CD8-positive, alpha-beta T cell (primary cell): ENCODE measurements at regions of chr16 and their contacts with region 1.

Region 1: GRCh38 chr16:56370185-56370876 is 55.0 kb downstream of the AMFR start:
- DNase-seq: no peak
- ATAC-seq: no peak
- H3K4me3 ChIP-seq: no peak overlapping the region
- H3K4me3 Mint-ChIP-seq: no peak overlapping the region
- H3K27ac ChIP-seq: no peak overlapping the region
- H3K27ac Mint-ChIP-seq: no peak overlapping the region
- H3K4me1 ChIP-seq: peaks cover 12% of the 10 kb centered on the region
- H3K4me1 Mint-ChIP-seq: peaks cover 25% of the 10 kb centered on the region
- H3K27me3 ChIP-seq: no peaks in the 10 kb centered on the region
- H3K27me3 Mint-ChIP-seq: no peaks in the 10 kb centered on the region
- CTCF ChIP-seq: no peak

Region 2: GRCh38 chr16:56262148-56262547 is 108.2 kb before region 1 on chr16:
- CTCF ChIA-PET with region 1: no interaction called
- POLR2A ChIA-PET with region 1: no interaction called
- intact Hi-C with region 1: no loop called
- DNase-seq: peak; percentile 17 to 87 (median 58)
- ATAC-seq: peak; percentile 93
- H3K4me3 ChIP-seq: peak overlapping the region in 1 of 2 experiments; percentile 21
- H3K4me3 Mint-ChIP-seq: peak overlapping the region; percentile 13
- H3K27ac ChIP-seq: peak overlapping the region in 1 of 2 experiments; percentile 69
- H3K27ac Mint-ChIP-seq: peak overlapping the region; percentile 65
- H3K4me1 ChIP-seq: peaks cover 28% of the 10 kb centered on the region
- H3K4me1 Mint-ChIP-seq: peaks cover 29% of the 10 kb centered on the region
- H3K27me3 ChIP-seq: no peaks in the 10 kb centered on the region
- H3K27me3 Mint-ChIP-seq: no peaks in the 10 kb centered on the region
- CTCF ChIP-seq: no peak

Region 3: DNA sequence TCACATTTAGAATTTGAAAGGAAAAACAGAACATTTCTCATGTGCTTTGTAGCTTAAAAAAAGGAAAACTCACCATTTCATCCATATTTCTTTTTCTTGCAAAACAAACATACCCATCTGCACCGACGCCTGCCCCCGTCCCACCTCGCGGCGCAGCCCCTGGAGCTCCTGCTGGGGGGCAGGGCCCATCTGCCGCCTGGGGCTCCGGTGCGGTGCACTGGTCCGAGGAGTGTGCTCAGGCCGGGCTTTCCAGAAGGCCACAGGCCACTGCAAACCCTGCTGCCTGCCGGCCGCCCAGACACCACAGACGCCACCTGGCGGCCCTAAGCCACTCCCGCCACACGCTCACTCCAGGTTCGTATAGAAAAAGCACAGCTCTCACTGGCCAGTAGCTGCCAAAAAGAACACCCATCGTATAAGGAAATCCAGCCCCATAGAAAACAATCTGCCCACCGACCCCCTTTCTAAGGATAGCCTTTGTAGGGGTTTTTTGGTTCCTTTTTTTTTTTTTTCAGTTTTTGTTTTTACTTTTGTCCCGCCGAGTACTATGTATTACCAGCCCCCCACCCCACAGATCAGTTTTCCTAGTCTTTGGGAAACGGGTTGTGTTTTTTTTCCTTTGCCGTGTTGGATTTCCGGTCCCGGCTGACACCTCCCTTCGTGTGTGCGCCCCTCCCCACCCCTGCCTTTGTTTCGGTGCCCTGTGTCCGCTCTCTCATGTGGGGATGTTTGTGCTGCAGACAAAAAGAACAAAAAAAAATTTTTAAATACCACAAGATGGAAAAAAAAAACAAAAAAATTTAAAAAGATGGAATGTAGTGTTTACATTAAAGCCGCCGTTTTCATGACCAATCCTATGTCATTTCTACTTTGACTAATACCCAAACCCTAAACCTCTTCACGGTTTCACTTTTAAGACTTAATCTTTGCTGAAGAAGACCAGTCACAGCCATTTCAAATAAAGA is 13.8 kb before region 1 on chr16:
- CTCF ChIA-PET with region 1: interaction called, 18 read pairs
- POLR2A ChIA-PET with region 1: no interaction called
- intact Hi-C with region 1: no loop called
- DNase-seq: peak; percentile 33 to 76 (median 54)
- ATAC-seq: peak; percentile 75
- H3K4me3 ChIP-seq: peak overlapping the region; percentile 55 to 60
- H3K4me3 Mint-ChIP-seq: peak overlapping the region; percentile 87
- H3K27ac ChIP-seq: peak overlapping the region; percentile 43 to 48
- H3K27ac Mint-ChIP-seq: peak overlapping the region; percentile 88
- H3K4me1 ChIP-seq: peaks cover 8% of the 10 kb centered on the region
- H3K4me1 Mint-ChIP-seq: peaks cover 21% of the 10 kb centered on the region
- H3K27me3 ChIP-seq: no peaks in the 10 kb centered on the region
- H3K27me3 Mint-ChIP-seq: no peaks in the 10 kb centered on the region
- CTCF ChIP-seq: peak; percentile 66

Region 4: DNA sequence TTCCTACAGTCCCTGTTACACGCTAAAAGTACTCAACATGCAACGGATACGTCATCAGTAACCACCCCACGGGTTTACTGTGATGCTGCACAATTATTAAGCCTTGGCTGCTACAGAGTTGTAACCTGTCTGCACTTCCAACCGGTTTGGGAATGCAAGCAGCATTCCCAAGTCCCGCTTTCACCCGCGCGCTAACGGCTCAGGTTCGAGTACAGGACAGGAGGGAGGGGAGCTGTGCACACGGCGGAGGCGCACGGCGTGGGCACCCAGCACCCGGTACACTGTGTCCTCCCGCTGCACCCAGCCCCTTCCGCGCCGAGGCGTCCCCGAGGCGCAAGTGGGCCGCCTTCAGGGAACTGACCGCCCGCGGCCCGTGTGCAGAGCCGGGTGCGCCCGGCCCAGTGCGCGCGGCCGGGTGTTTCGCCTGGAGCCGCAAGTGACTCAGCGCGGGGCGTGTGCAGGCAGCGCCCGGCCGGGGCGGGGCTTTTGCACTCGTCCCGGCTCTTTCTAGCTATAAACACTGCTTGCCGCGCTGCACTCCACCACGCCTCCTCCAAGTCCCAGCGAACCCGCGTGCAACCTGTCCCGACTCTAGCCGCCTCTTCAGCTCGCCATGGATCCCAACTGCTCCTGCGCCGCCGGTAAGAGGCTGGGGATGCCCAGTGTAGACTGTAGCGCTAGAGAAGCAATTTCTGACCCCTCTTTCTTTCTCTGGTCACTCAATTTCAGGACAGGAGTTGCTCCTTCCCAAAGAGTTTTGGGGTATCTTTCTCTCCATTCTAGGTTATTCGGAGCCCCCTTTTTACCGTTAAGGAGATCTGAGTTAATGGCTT is 237.9 kb after region 1 on chr16 and contains the start of gene MT2A:
- CTCF ChIA-PET with region 1: no interaction called
- POLR2A ChIA-PET with region 1: no interaction called
- intact Hi-C with region 1: no loop called
- DNase-seq: peak; percentile 68 to 94 (median 88)
- ATAC-seq: peak; percentile 75
- H3K4me3 ChIP-seq: peak within 1 kb of the TSS; percentile 91 to 95
- H3K4me3 Mint-ChIP-seq: peak within 1 kb of the TSS; percentile 98
- H3K27ac ChIP-seq: peak within 1 kb of the TSS; percentile 68 to 98
- H3K27ac Mint-ChIP-seq: peak within 1 kb of the TSS; percentile 94
- H3K4me1 ChIP-seq: peaks cover 37% of the 10 kb centered on the region
- H3K4me1 Mint-ChIP-seq: peaks cover 47% of the 10 kb centered on the region
- H3K27me3 ChIP-seq: no peaks in the 10 kb centered on the region
- H3K27me3 Mint-ChIP-seq: no peaks in the 10 kb centered on the region
- CTCF ChIP-seq: no peak
- total RNA-seq, gene MT2A: 71.0 to 95.7 TPM

Region 5: DNA sequence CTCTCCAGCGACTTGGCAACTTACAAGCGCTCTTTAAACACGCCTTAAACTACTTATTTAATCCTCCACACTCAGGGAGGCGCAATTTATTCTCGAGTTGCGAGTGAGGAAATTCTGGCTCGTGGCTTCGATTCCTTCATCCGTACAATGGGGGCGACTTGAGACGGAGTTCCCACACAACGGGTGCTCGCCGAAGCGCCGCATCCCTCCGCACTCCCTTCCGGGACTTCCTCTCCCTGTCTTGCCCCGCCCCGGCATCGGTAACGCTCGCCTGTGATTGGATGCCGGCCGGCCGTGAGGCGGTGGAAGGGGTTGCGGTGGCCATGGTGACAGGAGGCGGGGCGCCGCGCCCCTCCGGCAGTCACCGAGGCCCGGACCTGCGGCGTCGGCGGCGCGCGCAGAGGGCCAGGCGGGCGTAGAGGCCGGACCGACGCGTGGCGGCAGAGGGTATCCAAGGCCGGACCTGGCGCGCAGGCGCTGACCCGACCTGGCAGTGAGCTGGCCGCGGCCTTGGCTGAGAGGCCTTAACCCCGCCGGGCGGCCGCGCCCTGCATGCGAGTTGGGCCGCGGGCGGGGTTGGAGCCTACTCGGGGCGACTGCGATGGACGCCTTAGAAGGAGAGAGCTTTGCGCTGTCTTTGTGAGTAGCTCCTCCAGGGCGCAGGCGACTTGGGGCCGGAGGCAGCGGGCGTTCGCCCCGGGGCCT is 874.6 kb after region 1 on chr16 and contains the start of gene ARL2BP:
- CTCF ChIA-PET with region 1: no interaction called
- POLR2A ChIA-PET with region 1: no interaction called
- intact Hi-C with region 1: no loop called
- DNase-seq: peak; percentile 92 to 98 (median 97)
- ATAC-seq: peak; percentile 95
- H3K4me3 ChIP-seq: peak within 1 kb of the TSS; percentile 68 to 76
- H3K4me3 Mint-ChIP-seq: peak within 1 kb of the TSS; percentile 92
- H3K27ac ChIP-seq: peak within 1 kb of the TSS; percentile 50 to 87
- H3K27ac Mint-ChIP-seq: peak within 1 kb of the TSS; percentile 96
- H3K4me1 ChIP-seq: peaks cover 9% of the 10 kb centered on the region
- H3K4me1 Mint-ChIP-seq: peaks cover 19% of the 10 kb centered on the region
- H3K27me3 ChIP-seq: no peaks in the 10 kb centered on the region
- H3K27me3 Mint-ChIP-seq: no peaks in the 10 kb centered on the region
- CTCF ChIP-seq: no peak
- total RNA-seq, gene ARL2BP: 32.8 to 35.2 TPM